Calu3 (cell line): ENCODE measurements at regions of chr13 and their contacts with region 1.

Region 1: DNA sequence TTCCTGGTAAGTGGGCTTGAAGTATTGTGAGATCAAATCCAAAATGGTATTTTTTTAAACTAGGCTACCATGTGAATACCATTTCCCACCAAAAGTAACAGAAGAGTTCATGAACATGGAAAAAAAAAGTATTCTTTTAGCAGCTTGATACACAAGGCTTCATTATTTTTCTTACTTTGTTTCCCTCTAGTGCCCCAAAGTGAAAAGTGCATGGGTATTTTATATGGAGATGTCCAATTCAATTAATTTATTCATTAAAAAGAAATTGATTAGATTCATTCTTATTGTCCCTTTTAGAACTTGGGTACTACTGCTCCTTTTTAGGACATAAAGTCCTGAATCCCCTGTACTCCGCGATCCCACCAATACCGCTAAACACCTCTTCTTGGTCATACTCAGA is 28.6 kb upstream of the SCEL start:
- DNase-seq: no peak
- H3K4me3 Mint-ChIP-seq: no peak overlapping the region
- H3K27ac Mint-ChIP-seq: no peak overlapping the region
- H3K4me1 Mint-ChIP-seq: no peaks in the 10 kb centered on the region
- H3K27me3 Mint-ChIP-seq: no peaks in the 10 kb centered on the region
- CTCF ChIP-seq: no peak

Region 2: GRCh38 chr13:77521595-77522367 is 14.9 kb after region 1 on chr13:
- CTCF ChIA-PET with region 1: no interaction called
- intact Hi-C with region 1: loop called (anchors 1 kb)
- DNase-seq: peak; percentile 48
- H3K4me3 Mint-ChIP-seq: no peak overlapping the region
- H3K27ac Mint-ChIP-seq: no peak overlapping the region
- H3K4me1 Mint-ChIP-seq: peaks cover 13% of the 10 kb centered on the region
- H3K27me3 Mint-ChIP-seq: no peaks in the 10 kb centered on the region
- CTCF ChIP-seq: no peak

Region 3: DNA sequence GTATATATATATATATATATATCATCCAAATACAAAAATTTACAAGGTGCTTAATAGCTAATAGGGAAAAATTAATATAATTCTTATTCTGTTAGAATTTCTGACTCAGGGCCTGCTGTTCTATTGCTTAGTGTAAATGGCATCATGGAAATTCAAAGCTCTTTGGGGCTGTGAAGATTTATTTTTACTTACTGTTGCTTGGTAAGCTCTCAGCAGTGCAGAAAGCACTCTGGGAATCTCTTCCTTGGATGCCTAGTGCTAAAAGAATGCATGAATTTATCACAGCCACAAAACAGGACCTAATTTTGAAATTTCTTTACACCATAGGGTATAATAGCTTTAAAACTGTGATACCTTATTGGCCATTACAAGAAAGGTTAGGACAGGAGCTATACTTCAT is 121.3 kb after region 1 on chr13:
- CTCF ChIA-PET with region 1: no interaction called
- intact Hi-C with region 1: no loop called
- DNase-seq: no peak
- H3K4me3 Mint-ChIP-seq: no peak overlapping the region
- H3K27ac Mint-ChIP-seq: no peak overlapping the region
- H3K4me1 Mint-ChIP-seq: no peaks in the 10 kb centered on the region
- H3K27me3 Mint-ChIP-seq: no peaks in the 10 kb centered on the region
- CTCF ChIP-seq: no peak

Region 4: DNA sequence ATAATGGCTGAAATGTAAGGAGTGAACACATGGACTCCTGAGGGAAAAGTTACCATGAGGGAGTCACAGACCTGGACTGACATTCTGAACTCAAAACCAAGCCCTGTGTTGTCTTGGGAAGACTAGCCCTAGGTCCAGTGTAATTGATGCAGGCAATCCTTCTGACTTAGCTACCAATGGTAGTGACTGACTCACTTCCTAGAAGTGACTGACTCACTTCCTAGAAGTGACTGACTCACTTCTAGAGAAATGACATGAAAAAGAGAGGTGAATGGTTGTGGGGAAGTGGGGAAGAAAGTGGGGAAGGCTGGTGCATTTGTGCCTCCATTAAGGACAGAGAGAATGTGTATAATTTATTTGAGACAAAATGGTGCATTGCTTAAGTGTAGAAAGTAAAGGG is 361.8 kb after region 1 on chr13:
- CTCF ChIA-PET with region 1: no interaction called
- intact Hi-C with region 1: no loop called
- DNase-seq: no peak
- H3K4me3 Mint-ChIP-seq: no peak overlapping the region
- H3K27ac Mint-ChIP-seq: no peak overlapping the region
- H3K4me1 Mint-ChIP-seq: no peaks in the 10 kb centered on the region
- H3K27me3 Mint-ChIP-seq: no peaks in the 10 kb centered on the region
- CTCF ChIP-seq: no peak